ENCODE measurements at regions of chr16 and their contacts with region 1.

Region 1: DNA sequence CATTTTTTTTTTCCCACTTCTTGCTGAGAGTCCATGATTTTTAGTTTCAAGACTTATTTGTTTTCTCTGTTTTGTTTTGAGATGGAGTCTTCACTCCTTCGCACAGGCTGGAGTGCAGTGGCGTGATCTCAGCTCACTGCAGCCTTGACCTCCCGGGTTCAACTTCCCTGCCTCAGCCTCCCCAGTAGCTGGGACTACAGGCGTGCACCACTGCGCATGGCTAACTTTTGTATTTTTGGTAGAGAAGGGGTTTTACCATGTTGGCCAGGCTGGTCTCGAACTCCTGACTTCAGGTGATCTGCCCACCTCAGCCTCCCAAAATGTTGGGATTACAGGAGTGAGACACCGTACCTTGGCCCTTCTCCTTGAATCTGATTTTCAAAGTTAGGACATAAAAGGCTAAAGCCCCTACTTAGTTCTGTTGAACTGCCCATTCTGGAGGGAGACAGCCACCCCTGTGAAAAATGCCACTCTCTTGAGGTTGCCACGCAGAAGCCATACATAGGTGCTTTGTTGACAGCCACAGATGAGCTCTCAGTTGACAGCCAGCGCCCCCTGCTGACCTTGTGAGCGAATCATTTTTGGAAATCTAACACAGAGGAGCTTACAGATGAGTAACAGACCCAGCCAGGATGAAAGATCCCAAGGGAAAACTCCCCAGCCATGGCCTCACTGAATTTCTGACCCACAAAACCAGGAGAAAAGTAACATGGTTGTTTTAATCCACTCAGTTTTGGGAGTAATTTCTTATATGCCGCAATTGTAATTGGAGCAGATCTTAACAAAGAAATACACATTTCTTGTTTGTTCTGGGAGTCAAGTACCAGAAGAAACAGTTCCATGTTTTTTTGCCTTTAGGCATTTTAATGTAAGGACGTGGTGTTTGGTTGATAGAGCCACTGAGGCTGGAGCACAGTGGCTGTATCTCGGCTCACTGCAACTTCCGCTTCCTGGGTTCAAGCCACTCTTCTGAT is 38.8 kb downstream of the PKD1L3 start:
- DNase-seq: peak; percentile 96
- H3K4me3 ChIP-seq: no peak overlapping the region
- H3K27ac ChIP-seq: no peak overlapping the region
- H3K4me1 ChIP-seq: no peaks in the 10 kb centered on the region
- H3K27me3 ChIP-seq: no peaks in the 10 kb centered on the region
- CTCF ChIP-seq: peak; percentile 76 to 79 (median 77)
- EP300 ChIP-seq: no peak
- POLR2A ChIP-seq: no peak

Region 2: DNA sequence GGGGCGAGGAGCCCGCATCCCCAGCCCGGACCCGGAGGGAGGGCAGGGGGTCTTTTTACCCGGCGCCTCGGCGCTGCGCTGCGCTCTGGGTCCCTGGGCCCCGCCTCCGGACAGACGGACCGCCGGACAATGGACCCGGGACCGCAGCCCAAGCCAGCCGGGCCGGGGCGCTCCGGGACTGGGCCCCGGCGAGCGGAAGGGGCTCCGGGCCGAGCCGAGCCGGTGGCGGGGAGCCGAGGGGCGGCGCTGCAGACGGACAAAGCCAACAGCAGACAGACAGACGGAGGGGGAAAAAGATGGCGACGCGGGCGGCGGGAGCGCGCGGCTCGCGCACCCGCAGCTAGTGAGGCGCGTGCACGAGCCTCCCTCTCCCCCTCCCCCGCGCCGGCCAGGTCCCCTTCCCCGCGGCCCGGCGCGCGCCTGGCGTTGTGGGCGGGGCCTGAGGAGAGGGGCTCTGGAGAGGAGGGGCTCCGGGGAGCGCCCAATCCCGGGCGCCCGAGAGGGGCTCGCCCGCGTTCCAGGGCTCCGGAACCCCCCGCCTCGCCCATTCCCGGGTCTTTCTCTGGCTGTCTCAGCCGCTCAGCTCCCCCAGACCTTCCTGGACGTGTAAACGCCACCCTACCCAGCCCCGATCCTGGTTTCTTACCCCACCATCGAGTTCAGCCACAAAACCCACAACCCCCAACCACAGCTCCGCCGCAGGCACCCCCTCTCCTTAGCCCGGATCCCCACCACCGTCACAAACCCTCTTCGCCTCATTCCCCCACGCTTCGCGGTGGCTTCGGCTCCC is 77.3 kb before region 1 on chr16 and contains the start of gene ZNF821:
- intact Hi-C with region 1: loop called (anchors 5 kb)
- DNase-seq: no peak
- H3K4me3 ChIP-seq: peak within 1 kb of the TSS; percentile 79 to 97 (median 92)
- H3K27ac ChIP-seq: peak within 1 kb of the TSS; percentile 85 to 95 (median 91)
- H3K4me1 ChIP-seq: peaks cover 11 to 27% (median 25%) of the 10 kb centered on the region in 4 donors
- H3K27me3 ChIP-seq: no peaks in the 10 kb centered on the region
- CTCF ChIP-seq: peak; percentile 43 to 53 (median 51)
- EP300 ChIP-seq: no peak
- POLR2A ChIP-seq: no peak
- total RNA-seq, gene ZNF821: 2.1 to 6.5 (median 5.9) TPM

Region 3: DNA sequence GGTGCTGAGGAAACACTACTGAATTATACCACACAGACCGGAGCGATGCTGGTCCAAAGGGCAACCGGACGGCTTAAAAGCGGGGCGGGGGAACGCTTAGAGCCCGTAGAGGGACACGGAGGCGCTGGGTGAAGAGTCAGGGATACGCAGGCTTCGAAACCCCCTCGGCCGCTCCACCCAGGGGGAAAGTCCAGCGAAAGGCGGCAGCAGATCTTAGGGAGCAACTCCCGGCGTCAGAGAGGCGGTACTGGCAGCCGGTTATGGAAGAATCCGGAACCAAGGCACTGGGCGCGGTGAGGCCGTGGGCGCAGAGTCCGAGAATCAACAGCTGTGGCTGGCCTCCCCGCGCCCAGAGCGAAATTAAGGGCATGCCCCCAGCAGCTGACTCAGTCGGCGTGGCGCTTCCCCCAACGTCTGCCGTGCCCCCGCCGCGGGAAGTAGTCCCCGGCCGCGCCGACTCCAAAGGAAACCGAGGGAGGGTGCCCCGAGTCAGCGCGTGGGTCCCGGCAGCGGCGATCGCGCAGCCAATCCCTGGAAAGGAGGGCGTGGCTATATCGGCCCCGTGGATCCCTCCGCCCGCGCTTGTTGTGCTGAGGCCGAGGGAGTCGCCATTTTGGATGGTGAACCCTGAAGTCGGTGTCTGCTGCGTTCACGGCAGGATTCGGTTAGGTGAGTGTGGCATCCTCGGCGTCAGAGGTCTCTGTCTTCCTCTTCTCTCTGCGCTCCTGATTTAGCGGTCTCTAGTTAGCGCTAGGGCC is 66.3 kb before region 1 on chr16 and contains the start of gene IST1:
- intact Hi-C with region 1: loop called (anchors 5 kb)
- DNase-seq: peak; percentile 99
- H3K4me3 ChIP-seq: peak within 1 kb of the TSS; percentile 80 to 94 (median 90)
- H3K27ac ChIP-seq: peak within 1 kb of the TSS; percentile 91 to 99 (median 96)
- H3K4me1 ChIP-seq: peaks cover 39 to 47% (median 46%) of the 10 kb centered on the region in 4 donors
- H3K27me3 ChIP-seq: no peaks in the 10 kb centered on the region
- CTCF ChIP-seq: peak in 1 of 3 experiments; percentile 1
- EP300 ChIP-seq: no peak
- POLR2A ChIP-seq: peak; percentile 56
- total RNA-seq, gene IST1: 132 to 186 (median 166) TPM

Region 4: DNA sequence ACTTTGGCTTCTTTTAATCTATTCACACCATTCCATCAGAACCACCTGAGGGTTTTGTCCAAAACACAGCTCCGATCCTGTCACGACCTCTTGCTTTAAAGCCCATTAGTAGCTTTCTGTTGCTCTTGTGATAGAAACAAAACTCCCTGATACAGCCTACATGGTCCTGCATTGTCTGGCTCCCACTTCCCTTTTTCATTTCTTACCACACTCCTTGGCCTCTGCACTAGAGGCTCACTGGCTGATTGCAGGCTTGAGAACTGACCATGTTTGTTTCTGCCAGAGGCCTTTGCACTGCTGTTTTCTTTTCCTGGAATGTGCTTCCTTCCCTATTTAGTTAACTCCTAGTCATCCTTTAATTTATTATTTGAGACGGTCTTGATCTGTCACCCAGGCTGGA is 42.3 kb before region 1 on chr16:
- intact Hi-C with region 1: no loop called
- DNase-seq: no peak
- H3K4me3 ChIP-seq: no peak overlapping the region
- H3K27ac ChIP-seq: no peak overlapping the region
- H3K4me1 ChIP-seq: peaks cover 37 to 53% (median 47%) of the 10 kb centered on the region in 4 donors
- H3K27me3 ChIP-seq: no peaks in the 10 kb centered on the region
- CTCF ChIP-seq: no peak
- EP300 ChIP-seq: no peak
- POLR2A ChIP-seq: no peak